ENCODE measurements at regions of chr15 and their contacts with region 1.

Region 1: DNA sequence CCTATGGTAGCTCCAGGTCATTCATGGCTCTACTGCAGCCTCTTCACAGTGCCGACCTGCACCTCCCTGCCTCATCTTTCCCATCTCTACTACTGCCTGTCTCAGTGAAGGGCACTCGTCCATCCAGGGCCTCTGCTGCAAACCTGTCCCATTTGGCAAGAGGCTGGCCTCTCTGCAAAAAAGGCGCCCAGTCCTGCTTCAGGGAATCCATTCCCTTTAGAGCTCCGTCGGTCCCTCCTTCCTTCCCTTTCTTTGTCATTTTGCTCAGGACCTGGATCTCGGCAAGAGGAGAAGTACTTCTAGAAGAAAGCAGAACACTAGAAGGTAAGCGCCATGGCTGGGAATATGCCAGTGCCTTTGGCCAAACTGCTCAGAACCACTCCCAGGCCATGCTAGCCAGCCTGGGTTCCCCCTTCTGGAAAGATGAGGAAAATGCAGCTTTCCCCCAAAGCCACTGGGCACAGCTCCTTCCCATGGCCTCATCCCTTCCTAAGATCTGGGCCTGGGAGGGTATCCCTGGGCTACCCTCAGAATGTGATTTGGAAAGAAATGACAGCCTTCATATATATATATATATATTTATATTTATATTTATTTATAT is 6.4 kb upstream of the ISL2 start:
- DNase-seq: no peak
- H3K4me3 Mint-ChIP-seq: no peak overlapping the region
- H3K27ac Mint-ChIP-seq: no peak overlapping the region
- H3K4me1 Mint-ChIP-seq: peaks cover 8% of the 10 kb centered on the region
- H3K27me3 Mint-ChIP-seq: peaks cover 51% of the 10 kb centered on the region

Region 2: DNA sequence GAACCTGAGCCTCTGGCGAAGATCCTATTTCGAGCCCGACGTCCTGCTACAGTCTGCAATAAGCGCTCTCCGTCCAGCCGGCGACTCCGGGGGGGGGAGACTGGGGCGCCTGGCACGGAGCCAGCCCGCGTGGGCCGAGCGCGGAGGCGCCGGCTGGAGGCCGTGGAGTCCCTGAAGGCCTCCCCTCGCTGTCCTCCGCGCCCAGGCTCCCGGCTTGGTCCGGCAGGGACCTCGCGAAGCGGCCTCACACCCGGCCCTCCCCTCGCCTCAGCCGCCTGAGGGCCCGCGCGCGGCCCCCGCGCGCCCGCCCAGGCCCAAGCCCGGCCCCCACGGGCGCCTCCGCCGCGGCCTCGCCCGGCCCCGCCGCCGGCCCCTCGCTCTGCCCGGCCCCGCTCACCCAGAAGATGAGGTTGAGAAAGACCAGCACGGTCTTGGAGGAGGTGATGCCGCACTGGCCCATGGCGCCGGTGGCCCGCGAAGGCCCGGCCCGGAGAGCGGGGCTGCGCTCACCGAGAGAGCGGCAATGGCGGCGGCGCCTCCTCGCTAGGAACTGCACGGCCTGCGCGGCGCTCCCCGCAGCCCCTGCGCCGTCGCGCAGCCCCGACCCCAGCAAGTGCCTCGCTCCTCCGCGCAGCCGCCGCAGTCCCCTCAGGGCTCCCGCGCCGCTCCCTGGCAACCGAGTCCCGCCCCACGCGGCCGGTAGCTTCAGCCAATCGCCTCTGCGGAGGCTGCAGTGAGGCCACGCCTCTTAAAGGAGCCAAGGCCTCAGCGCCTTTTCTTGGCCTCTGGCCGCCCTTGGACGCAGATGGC is 740.5 kb after region 1 on chr15 and contains the start of gene TSPAN3:
- intact Hi-C with region 1: loop called (anchors 5 kb)
- DNase-seq: peak; percentile 91
- H3K4me3 Mint-ChIP-seq: peak within 1 kb of the TSS; percentile 87
- H3K27ac Mint-ChIP-seq: peak within 1 kb of the TSS; percentile 42
- H3K4me1 Mint-ChIP-seq: peaks cover 27% of the 10 kb centered on the region
- H3K27me3 Mint-ChIP-seq: peaks cover 19% of the 10 kb centered on the region
- total RNA-seq, gene TSPAN3: 41.5 and 41.6 TPM in 2 replicates